ENCODE measurements at regions of chr14 and their contacts with region 1.

Region 1: DNA sequence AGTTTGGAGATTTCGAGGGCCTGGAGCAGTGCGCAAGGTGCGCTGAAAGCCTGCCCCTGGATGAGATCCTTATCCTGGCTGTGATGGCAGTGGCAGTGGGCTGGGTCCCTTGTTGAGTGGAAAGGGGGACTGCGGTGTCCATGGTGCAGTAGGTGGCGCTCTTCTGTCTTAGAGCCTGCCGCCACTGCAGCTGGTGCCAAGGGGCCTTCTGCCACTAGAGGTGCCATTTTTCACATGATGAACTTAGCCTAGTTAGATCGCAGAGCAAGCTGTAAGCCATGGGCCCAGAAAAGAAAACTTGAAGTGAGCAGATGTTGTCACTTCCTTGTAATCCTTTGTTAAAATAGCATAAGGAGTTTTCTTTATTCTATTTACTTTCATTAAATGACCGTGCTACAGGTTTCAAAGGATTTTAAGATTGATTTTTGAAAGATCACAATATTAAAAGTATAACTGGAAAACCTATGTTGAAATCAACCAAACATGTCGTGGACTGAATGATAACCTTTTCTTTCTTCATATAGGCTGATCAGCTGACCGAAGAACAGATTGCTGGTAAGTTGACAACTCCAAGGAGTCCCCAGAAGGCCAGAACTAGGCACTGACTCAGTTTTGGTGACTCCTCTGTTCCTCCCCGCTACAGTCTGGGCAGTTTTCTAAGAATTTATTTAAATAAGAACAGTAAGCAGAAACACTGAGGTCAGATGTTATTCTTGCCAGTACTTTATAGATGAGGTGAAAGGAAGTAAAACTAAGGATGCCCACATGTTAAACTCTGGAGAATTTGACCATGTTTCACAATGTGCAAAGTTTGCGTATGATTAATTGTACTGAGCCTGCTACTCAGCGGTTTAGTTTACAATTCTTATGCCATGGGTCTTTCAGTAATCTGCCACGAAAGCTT is 3.0 kb downstream of the CALM1 start:
- DNase-seq: peak; percentile 86 to 92 (median 90)
- H3K4me3 ChIP-seq: peak overlapping the region in 1 of 3 experiments; percentile 99
- H3K4me3 Mint-ChIP-seq: peak overlapping the region; percentile 59 to 60
- H3K27ac ChIP-seq: peak overlapping the region; percentile 32 to 61
- H3K27ac Mint-ChIP-seq: peak overlapping the region; percentile 68 to 95 (median 81)
- H3K4me1 ChIP-seq: peaks cover 32 to 42% of the 10 kb centered on the region in 2 donors
- H3K4me1 Mint-ChIP-seq: peaks cover 46% of the 10 kb centered on the region
- H3K27me3 ChIP-seq: no peaks in the 10 kb centered on the region
- H3K27me3 Mint-ChIP-seq: peaks cover 0 to 1% (median 0%) of the 10 kb centered on the region in 3 donors
- CTCF ChIP-seq: peak; percentile 100

Region 2: DNA sequence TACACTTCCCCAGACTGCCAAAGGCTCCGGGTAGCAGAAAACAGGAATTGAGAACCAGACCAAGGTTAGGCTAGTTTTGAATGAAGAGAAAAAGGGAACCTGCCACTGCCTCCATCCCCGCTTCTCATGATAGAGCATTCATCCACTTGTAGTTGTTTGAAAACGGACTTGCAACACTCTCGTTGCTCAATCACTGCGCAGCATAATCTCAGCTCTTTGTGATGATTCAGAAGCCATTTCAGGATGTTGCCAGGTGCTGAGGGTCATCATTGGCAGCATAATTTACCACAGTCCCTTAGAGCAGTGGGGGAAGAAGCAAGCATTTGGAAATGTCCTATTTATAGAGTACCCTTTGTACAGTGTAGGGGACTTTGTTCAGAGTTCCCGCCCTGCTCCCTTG is 312.4 kb before region 1 on chr14:
- intact Hi-C with region 1: loop called in 1 of 2 experiments (anchors 5 kb)
- DNase-seq: peak; percentile 98 to 100 (median 99)
- H3K4me3 ChIP-seq: no peak overlapping the region
- H3K4me3 Mint-ChIP-seq: no peak overlapping the region
- H3K27ac ChIP-seq: peak overlapping the region; percentile 49 to 52
- H3K27ac Mint-ChIP-seq: peak overlapping the region; percentile 63 to 87 (median 85)
- H3K4me1 ChIP-seq: peaks cover 24 to 28% of the 10 kb centered on the region in 2 donors
- H3K4me1 Mint-ChIP-seq: peaks cover 33% of the 10 kb centered on the region
- H3K27me3 ChIP-seq: no peaks in the 10 kb centered on the region
- H3K27me3 Mint-ChIP-seq: peaks cover 0 to 8% (median 6%) of the 10 kb centered on the region in 3 donors
- CTCF ChIP-seq: no peak

Region 3: GRCh38 chr14:90294872-90295271 is 104.9 kb before region 1 on chr14:
- intact Hi-C with region 1: loop called in 1 of 2 experiments (anchors 5 kb)
- DNase-seq: peak; percentile 81 to 93 (median 91)
- H3K4me3 ChIP-seq: no peak overlapping the region
- H3K4me3 Mint-ChIP-seq: no peak overlapping the region
- H3K27ac ChIP-seq: peak overlapping the region; percentile 32 to 94
- H3K27ac Mint-ChIP-seq: peak overlapping the region; percentile 46 to 96 (median 94)
- H3K4me1 ChIP-seq: peaks cover 59 to 62% of the 10 kb centered on the region in 2 donors
- H3K4me1 Mint-ChIP-seq: peaks cover 51% of the 10 kb centered on the region
- H3K27me3 ChIP-seq: no peaks in the 10 kb centered on the region
- H3K27me3 Mint-ChIP-seq: peaks cover 0 to 5% (median 3%) of the 10 kb centered on the region in 3 donors
- CTCF ChIP-seq: no peak

Region 4: GRCh38 chr14:90383075-90383730 is 16.6 kb before region 1 on chr14:
- intact Hi-C with region 1: loop called (anchors 1 kb)
- DNase-seq: peak; percentile 99 to 100 (median 99)
- H3K4me3 ChIP-seq: peak overlapping the region; percentile 55 to 97 (median 87)
- H3K4me3 Mint-ChIP-seq: no peak overlapping the region
- H3K27ac ChIP-seq: peak overlapping the region; percentile 98 to 100
- H3K27ac Mint-ChIP-seq: no peak overlapping the region
- H3K4me1 ChIP-seq: peaks cover 18 to 25% of the 10 kb centered on the region in 2 donors
- H3K4me1 Mint-ChIP-seq: peaks cover 14% of the 10 kb centered on the region
- H3K27me3 ChIP-seq: no peaks in the 10 kb centered on the region
- H3K27me3 Mint-ChIP-seq: peaks cover 0 to 3% (median 1%) of the 10 kb centered on the region in 3 donors
- CTCF ChIP-seq: no peak

Region 5: DNA sequence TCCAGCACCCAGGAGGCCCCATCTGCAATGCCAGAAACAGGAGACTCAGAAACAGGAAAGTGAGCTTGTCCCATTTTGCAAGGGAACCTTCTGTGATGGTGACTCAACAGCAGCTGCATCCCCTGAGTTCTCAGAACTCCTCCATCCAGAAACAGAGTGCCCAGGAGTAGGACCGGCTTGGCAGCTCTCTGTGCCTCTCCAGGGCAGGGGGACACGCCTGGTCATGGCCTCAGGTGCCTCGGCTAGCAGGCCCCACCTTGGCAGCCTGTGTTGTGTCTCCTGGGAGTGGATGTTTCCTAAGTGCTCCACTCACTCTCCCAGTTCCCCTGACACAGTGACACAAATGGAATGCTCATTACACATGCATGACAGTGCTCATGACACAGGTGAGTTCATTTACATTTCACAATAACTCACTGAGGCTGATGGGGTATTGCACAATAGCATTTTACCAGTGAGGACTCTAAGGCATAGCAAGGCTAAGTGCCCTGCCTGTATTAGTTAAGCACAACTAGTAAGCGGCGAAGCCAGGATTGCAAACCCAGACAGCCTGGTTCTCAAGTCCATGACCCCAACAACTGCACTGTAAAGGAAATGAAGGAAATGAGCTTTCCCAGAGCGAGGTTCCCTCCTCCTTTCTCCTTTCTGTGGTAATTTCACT is 44.4 kb after region 1 on chr14:
- intact Hi-C with region 1: no loop called
- DNase-seq: no peak
- H3K4me3 ChIP-seq: no peak overlapping the region
- H3K4me3 Mint-ChIP-seq: no peak overlapping the region
- H3K27ac ChIP-seq: no peak overlapping the region
- H3K27ac Mint-ChIP-seq: no peak overlapping the region
- H3K4me1 ChIP-seq: no peaks in the 10 kb centered on the region
- H3K4me1 Mint-ChIP-seq: peaks cover 7% of the 10 kb centered on the region
- H3K27me3 ChIP-seq: no peaks in the 10 kb centered on the region
- H3K27me3 Mint-ChIP-seq: peaks cover 2 to 6% (median 5%) of the 10 kb centered on the region in 3 donors
- CTCF ChIP-seq: no peak

Region 6: DNA sequence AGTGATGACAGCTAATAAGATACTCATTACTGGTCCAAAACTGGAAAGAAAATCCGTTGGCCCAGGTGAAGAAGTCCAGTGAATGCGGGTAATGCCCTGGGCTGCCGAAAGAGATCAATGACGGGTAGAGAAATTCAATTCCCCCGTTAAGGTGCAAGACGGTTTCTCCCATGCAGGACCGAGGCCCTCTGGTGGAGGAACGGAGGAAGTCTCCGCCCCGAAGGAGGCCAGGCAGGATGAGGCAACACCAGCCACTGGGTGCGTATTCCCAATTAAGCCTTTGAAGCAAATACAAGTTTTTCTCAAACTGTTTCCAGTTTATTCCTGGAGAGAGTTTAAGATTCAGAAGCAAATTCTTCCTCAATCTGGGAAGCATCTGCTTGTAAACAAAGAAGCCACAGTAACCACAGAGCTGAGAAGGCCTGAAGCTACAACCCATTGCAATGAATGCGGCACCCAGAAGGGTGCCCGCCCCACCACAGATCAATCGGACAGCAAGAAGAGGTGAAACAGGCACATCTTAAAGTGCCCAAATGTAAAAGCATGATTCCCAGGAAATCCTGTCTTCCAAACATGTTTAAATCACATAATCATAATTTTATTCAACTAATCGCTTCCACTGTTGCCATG is 297.9 kb after region 1 on chr14:
- intact Hi-C with region 1: loop called in 1 of 2 experiments (anchors 10 kb)
- DNase-seq: peak; percentile 64 to 75 (median 70)
- H3K4me3 ChIP-seq: no peak overlapping the region
- H3K4me3 Mint-ChIP-seq: no peak overlapping the region
- H3K27ac ChIP-seq: no peak overlapping the region
- H3K27ac Mint-ChIP-seq: no peak overlapping the region
- H3K4me1 ChIP-seq: peaks cover 5 to 7% of the 10 kb centered on the region in 2 donors
- H3K4me1 Mint-ChIP-seq: peaks cover 25% of the 10 kb centered on the region
- H3K27me3 ChIP-seq: no peaks in the 10 kb centered on the region
- H3K27me3 Mint-ChIP-seq: peaks cover 0 to 2% (median 2%) of the 10 kb centered on the region in 3 donors
- CTCF ChIP-seq: peak; percentile 96

Region 7: GRCh38 chr14:90758028-90758889 is 358.5 kb after region 1 on chr14:
- intact Hi-C with region 1: loop called (anchors 1 to 5 kb)
- DNase-seq: peak; percentile 94 to 95 (median 95)
- H3K4me3 ChIP-seq: peak overlapping the region; percentile 51 to 80 (median 75)
- H3K4me3 Mint-ChIP-seq: peak overlapping the region; percentile 80 to 88
- H3K27ac ChIP-seq: peak overlapping the region; percentile 47 to 86
- H3K27ac Mint-ChIP-seq: peak overlapping the region; percentile 35 to 87 (median 76)
- H3K4me1 ChIP-seq: peaks cover 15% of the 10 kb centered on the region in 2 donors
- H3K4me1 Mint-ChIP-seq: peaks cover 15% of the 10 kb centered on the region
- H3K27me3 ChIP-seq: no peaks in the 10 kb centered on the region
- H3K27me3 Mint-ChIP-seq: peaks cover 4 to 8% (median 5%) of the 10 kb centered on the region in 3 donors
- CTCF ChIP-seq: peak; percentile 86

Region 8: DNA sequence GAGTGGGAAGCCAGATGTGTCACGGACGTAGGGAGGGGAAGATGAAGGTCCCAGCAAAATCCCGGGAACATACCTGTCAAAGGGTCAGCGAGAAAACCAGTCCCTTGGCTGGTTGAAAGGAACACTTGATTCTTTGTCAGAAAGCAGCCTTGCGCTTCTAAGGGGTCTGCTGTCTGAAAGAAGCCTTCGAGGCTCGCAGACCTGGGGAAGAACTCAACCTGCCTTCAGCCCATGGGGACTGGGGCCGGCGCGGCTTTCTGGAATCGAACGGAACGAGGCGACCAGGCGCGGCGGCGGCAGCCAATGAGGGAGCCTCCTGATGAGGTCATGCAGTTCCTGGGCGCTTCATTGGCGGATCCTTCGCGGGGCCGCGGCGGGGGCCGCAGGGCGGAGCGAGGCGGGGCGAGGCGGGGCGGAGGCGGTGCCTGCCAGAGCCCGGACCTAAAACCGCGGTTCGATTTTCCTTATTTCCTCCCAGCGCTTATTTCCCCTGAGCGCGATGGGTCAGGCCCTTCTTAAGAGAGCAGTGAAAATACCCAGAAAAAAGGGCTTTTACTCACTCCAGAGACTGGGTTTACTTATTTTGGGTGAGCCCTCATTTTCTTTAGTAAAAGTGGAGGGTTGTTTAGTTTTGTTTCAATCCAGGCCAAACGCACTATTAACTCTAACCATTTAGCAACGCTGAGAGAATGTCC is 428.3 kb after region 1 on chr14:
- intact Hi-C with region 1: loop called in 1 of 2 experiments (anchors 10 kb)
- DNase-seq: peak; percentile 77 to 88 (median 87)
- H3K4me3 ChIP-seq: peak overlapping the region; percentile 39 to 75 (median 44)
- H3K4me3 Mint-ChIP-seq: peak overlapping the region; percentile 72 to 85
- H3K27ac ChIP-seq: peak overlapping the region; percentile 86 to 90
- H3K27ac Mint-ChIP-seq: peak overlapping the region; percentile 90 to 95 (median 93)
- H3K4me1 ChIP-seq: peaks cover 20 to 23% of the 10 kb centered on the region in 2 donors
- H3K4me1 Mint-ChIP-seq: peaks cover 19% of the 10 kb centered on the region
- H3K27me3 ChIP-seq: no peaks in the 10 kb centered on the region
- H3K27me3 Mint-ChIP-seq: peaks cover 2 to 9% (median 6%) of the 10 kb centered on the region in 3 donors
- CTCF ChIP-seq: no peak

Measured in CD14-positive monocyte (primary cell).